Ovary (tissue), 10 donors: ENCODE measurements at regions of chr4 and their contacts with region 1.

Region 1: DNA sequence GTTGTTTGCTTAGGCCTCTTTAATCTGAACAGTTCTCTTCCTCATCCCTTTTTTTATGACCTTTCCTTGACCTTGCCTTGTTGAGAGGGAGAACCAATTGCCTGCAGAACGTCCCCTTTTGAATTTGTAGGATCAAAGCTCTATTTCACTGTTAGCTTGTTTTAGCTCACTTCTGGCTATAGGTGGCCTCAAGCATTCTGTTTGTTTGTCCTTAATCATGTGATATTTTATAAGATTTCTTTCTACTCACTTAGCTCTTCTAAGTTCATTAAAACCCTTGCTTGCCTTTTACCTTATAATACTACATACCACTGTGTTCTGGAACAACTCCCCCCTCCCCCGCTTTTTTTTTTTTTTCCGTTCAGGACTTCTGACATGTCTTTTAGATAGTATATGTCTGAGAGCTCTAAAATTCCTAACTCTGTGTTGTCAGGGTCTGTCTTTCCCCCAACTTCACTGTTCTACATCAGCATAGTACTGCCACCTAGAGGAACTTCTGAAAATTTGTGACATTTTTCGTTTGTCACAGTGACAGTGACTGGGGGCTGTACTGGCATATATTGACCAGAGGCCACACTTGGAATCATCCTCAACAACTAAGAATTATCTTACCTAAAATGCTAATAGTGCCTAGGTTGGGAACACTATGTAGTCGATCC is 128.5 kb downstream of the LARP7 start:
- DNase-seq: no peak
- H3K4me3 ChIP-seq: no peak overlapping the region
- H3K27ac ChIP-seq: no peak overlapping the region
- H3K4me1 ChIP-seq: no peaks in the 10 kb centered on the region
- H3K27me3 ChIP-seq: no peaks in the 10 kb centered on the region
- CTCF ChIP-seq: no peak
- EP300 ChIP-seq: no peak
- POLR2A ChIP-seq: no peak

Region 2: DNA sequence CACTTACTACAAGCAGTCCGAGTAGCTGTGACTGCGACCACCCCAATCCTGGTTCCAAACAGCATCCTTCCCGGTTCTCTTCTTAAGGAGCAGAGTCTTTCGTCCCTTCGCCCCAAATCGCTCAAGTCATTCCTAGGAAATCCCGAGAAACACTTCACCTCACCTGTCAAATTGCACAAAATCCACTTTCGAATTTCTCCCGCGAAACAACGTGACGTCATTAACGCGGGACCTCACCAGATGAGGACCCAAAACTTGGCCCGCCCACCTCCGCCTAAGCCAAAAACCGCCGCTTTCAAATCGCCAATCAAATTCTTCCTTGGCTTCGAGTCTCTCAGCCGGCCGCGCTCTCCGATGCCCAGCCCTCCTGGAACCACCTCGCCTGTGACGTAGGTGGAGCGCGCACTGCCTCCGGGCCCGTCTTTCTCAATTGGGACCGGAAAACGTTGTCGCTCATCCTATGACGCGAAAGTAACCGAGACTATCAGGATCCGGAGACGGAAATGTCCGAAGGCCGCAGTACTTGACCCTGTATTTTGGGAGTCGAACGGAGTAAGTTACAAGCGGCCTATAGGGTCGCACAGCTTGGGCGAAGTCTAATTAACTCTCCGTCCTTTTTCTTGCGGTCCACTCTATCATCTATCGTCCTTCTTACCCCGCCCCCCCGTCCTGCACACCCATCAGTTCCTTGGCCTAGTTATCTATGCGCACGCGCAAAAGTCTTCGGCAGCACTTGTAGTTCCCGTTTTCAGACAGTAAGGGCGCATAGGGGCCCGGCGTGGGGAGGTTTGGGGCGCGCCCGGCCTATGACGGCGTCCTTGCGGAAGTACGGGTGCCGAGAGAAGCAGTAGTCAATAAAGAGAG is 128.5 kb before region 1 on chr4 and contains the starts of genes LARP7 and ZGRF1:
- intact Hi-C with region 1: loop called in 2 of 4 experiments (anchors 10 kb)
- DNase-seq: peak; percentile 99
- H3K4me3 ChIP-seq: peak within 1 kb of the TSS; percentile 59
- H3K27ac ChIP-seq: peak within 1 kb of the TSS; percentile 80 to 93
- H3K4me1 ChIP-seq: peaks cover 2% of the 10 kb centered on the region
- H3K27me3 ChIP-seq: no peaks in the 10 kb centered on the region
- CTCF ChIP-seq: peak; percentile 85 to 99 (median 98)
- EP300 ChIP-seq: no peak
- POLR2A ChIP-seq: peak; percentile 34
- total RNA-seq, gene LARP7: 25.0 to 47.1 (median 36.3) TPM
- total RNA-seq, gene ZGRF1: 4.2 to 6.1 (median 4.5) TPM

Region 3: GRCh38 chr4:112938461-112939058 is 173.1 kb after region 1 on chr4:
- intact Hi-C with region 1: loop called in 1 of 4 experiments (anchors 10 kb)
- DNase-seq: no peak
- H3K4me3 ChIP-seq: no peak overlapping the region
- H3K27ac ChIP-seq: no peak overlapping the region
- H3K4me1 ChIP-seq: no peaks in the 10 kb centered on the region
- H3K27me3 ChIP-seq: no peaks in the 10 kb centered on the region
- CTCF ChIP-seq: peak; percentile 44 to 72 (median 57)
- EP300 ChIP-seq: no peak
- POLR2A ChIP-seq: no peak